Left cardiac atrium (tissue), 4 donors: ENCODE measurements at regions of chr14 and their contacts with region 1.

Region 1: DNA sequence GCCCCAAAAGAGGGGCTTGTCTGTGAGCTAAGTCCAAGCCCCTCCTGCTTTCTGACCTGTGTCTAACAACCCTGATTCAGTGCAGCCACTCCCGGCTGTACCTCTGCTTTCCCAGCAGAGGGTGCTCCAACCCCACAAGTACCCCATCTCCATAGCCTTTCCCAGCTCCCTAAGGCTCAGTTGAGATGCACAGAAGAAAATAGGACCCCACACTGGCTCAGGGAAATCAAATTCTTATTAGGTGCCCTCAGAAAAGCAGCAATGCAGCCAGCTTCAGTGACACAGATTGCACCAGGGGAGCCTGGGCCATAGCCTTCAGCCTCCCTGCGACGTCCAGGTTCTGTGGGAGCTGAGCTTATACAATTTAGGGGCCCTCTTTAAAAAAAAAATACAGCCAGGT is 49.9 kb downstream of the LRRC74A start:
- DNase-seq: peak; percentile 53
- ATAC-seq: peak; percentile 91

Region 2: GRCh38 chr14:76947078-76947837 is 71.2 kb after region 1 on chr14:
- intact Hi-C with region 1: no loop called
- DNase-seq: peak; percentile 89
- ATAC-seq: peak; percentile 92 to 95

Region 3: DNA sequence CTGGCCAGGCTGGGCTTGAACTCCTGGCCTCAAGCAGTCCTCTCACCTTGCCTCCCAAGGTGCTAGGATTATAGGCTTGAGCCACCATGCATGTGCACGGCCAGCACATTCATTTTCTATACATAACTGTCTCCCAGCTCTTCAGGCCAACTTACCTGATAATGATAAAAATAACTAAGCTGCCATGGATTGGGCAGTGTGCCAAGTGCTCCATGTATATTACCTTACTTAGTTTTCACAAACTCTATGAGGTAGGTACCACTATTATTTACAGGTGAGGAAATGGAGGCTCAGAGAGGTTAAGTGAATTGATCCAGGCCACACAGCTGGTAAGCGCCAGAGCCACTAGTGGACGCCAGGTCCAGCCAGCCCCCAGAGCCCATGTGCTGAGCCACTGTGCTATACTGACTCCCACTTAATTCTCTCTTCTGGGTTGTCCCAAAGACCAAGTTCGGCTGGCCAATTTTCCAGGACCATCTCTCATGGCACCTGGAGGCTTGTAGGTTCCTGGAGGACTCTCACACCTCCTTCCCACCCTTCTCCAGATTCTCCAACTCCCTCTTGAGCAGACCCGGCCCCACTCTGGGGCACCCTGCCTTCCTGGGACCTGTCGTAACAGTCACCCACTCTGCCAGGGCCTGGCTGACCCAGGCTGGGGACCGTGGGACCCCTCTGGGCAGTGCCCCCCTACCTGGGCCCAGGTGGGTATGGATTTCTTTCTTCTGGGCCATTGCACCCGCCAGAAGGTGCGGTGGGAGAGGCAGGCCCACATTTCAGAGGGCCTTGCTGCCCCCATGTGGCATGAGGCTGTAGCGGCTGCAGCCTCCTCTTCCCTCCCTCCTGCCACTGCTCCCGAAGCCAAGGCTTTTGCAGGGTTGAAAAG is 191.8 kb after region 1 on chr14:
- intact Hi-C with region 1: loop called (anchors 2 to 5 kb)
- DNase-seq: peak; percentile 67
- ATAC-seq: peak; percentile 76 to 77

Region 4: GRCh38 chr14:77314043-77314442 is 438.0 kb after region 1 on chr14:
- intact Hi-C with region 1: loop called (anchors 5 kb)
- DNase-seq: no peak
- ATAC-seq: no peak